Heart left ventricle (tissue), 16 donors: ENCODE measurements at regions of chr4 and their contacts with region 1.

Region 1: GRCh38 chr4:52376132-52376704 is 282.9 kb downstream of the USP46 start:
- DNase-seq: peak in 1 of 5 donors; percentile 20
- ATAC-seq: no peak
- H3K4me3 ChIP-seq: no peak overlapping the region
- H3K27ac ChIP-seq: no peak overlapping the region
- H3K4me1 ChIP-seq: peaks cover 0 to 6% (median 0%) of the 10 kb centered on the region in 12 donors
- H3K27me3 ChIP-seq: no peaks in the 10 kb centered on the region
- CTCF ChIP-seq: peak; percentile 40 to 74 (median 62)
- POLR2A ChIP-seq: no peak

Region 2: GRCh38 chr4:52234561-52235440 is 141.4 kb before region 1 on chr4:
- intact Hi-C with region 1: loop called in 2 of 10 experiments (anchors 5 to 10 kb)
- DNase-seq: no peak
- ATAC-seq: peak; percentile 73 to 86 (median 78)
- H3K4me3 ChIP-seq: peak overlapping the region in 2 of 12 donors; percentile 2 to 6
- H3K27ac ChIP-seq: no peak overlapping the region
- H3K4me1 ChIP-seq: peaks cover 0 to 5% (median 0%) of the 10 kb centered on the region in 12 donors
- H3K27me3 ChIP-seq: peaks cover 0 to 3% (median 0%) of the 10 kb centered on the region in 9 donors
- CTCF ChIP-seq: peak in 11 of 12 donors; percentile 37 to 77 (median 64)
- POLR2A ChIP-seq: no peak

Region 3: DNA sequence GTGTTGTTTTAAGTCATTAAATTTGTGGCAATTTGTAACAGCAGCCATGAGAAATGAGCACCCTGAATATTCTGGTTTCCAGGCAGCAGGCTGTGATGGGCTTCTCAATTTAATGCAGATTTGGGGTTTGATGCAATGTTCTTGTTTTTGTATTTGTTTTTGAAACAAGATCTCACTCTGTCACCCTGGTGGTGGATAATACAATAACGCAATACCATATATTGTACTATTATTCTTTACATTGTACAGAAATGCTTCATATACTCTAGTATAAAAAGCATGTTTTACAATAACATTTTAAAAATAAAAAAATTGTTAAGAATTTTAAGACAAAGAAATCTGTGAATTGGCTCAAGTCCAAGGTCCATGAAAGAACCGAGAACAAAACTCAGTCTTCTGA is 153.8 kb after region 1 on chr4:
- intact Hi-C with region 1: loop called in 3 of 10 experiments (anchors 10 kb)
- DNase-seq: no peak
- ATAC-seq: no peak
- H3K4me3 ChIP-seq: no peak overlapping the region
- H3K27ac ChIP-seq: no peak overlapping the region
- H3K4me1 ChIP-seq: no peaks in the 10 kb centered on the region
- H3K27me3 ChIP-seq: no peaks in the 10 kb centered on the region
- CTCF ChIP-seq: peak in 1 of 12 donors; percentile 6
- POLR2A ChIP-seq: no peak

Region 4: DNA sequence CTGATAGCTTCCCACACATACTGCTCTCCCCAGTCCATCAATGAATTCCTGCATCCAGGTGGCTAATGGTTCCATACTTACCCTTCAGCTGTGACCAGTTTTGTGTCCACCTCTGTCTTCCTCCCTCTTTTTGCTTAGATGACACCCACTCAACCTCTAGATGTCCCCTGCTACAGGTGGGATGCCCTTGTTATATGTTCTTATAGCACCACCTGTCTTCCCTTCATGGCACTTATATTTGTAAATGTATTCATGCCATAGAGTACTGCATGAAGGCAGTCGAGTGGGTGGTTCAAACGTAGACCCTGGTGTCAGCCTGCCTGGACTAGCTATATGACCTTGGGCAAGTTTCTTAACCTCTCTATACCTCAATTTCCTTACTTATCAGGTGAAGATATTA is 289.4 kb after region 1 on chr4:
- intact Hi-C with region 1: loop called in 5 of 10 experiments (anchors 5 to 10 kb)
- DNase-seq: no peak
- ATAC-seq: peak; percentile 30 to 58 (median 34)
- H3K4me3 ChIP-seq: no peak overlapping the region
- H3K27ac ChIP-seq: no peak overlapping the region
- H3K4me1 ChIP-seq: peaks cover 0 to 21% (median 10%) of the 10 kb centered on the region in 12 donors
- H3K27me3 ChIP-seq: peaks cover 0 to 5% (median 0%) of the 10 kb centered on the region in 9 donors
- CTCF ChIP-seq: peak in 9 of 12 donors; percentile 9 to 48 (median 22)
- POLR2A ChIP-seq: no peak

Region 5: GRCh38 chr4:54228056-54228527 is 1851.9 kb after region 1 on chr4:
- intact Hi-C with region 1: loop called in 3 of 10 experiments (anchors 5 to 10 kb)
- DNase-seq: peak; percentile 74 to 86 (median 77)
- ATAC-seq: peak; percentile 63 to 74 (median 70)
- H3K4me3 ChIP-seq: peak overlapping the region in 11 of 12 donors; percentile 26 to 80 (median 53)
- H3K27ac ChIP-seq: peak overlapping the region in 10 of 12 donors; percentile 1 to 89 (median 68)
- H3K4me1 ChIP-seq: peaks cover 6 to 66% (median 53%) of the 10 kb centered on the region in 12 donors
- H3K27me3 ChIP-seq: peaks cover 48 to 98% (median 92%) of the 10 kb centered on the region in 9 donors
- CTCF ChIP-seq: peak; percentile 50 to 81 (median 74)
- POLR2A ChIP-seq: no peak